ENCODE measurements at regions of chr3 and their contacts with region 1.

Region 1: DNA sequence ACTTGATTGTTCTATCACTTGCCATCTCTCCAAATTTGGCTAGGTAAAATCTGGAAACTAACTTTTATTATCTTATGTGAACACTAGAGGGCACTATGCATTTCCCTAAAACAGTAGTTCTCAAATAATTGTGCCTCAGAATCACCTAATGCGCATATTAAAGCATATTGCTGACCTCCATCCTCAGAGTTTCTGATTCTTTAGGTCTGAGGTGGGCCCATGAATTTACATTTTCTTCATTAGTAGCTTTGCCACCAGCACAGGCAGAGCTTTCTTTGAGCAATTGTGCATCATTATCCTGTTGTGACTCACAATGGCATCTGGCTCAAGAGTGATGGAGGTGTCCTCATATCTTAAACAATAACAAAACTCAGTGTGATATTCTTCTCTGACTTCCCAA is 17.5 kb upstream of the BCHE start:
- DNase-seq: no peak

Region 2: GRCh38 chr3:166013073-166013679 is 158.5 kb after region 1 on chr3:
- intact Hi-C with region 1: no loop called
- DNase-seq: no peak

Region 3: DNA sequence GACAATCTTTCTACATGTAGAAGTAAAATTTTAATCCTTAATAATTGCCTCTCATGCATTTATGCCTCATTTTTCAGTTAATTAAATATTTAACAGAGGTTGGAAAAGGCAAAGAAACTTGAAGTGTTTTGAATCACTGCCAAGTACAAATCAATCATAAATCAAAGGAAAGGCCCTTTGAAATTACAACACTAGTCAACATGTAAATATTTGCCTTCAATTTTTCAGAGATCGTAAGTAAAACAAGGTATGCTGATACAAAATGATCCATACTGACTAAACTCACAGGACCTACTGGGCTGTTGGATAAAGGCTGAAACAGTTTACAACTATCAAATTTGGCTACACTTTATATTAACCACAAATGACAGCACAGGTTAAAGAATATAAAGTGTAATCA is 1491.5 kb after region 1 on chr3:
- intact Hi-C with region 1: loop called (anchors 10 kb)
- DNase-seq: no peak